WTC11 (cell line): ENCODE measurements at regions of chr2 and their contacts with region 1.

Region 1: DNA sequence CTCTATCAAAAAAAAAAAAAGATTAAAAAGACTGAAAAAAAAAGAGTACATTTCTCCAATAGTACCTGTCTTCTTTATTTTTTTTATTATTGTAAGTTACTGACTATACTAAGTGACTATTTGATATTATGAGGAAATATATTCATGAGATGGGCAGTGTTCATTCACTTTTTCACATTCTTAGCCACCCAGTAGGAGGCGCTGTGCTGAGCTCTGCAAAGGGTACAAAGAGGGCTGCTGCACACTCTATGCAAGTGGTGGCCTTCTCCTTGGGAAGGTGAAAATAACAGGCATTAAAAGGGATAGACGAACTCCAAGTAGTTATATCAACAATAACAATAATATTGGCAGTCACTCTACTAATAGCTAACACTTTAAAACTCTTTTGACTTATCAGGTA is 1034.9 kb upstream of the FANCL start:
- DNase-seq: peak; percentile 53
- ATAC-seq: peak; percentile 82
- H3K4me3 Mint-ChIP-seq: no peak overlapping the region
- H3K27ac Mint-ChIP-seq: no peak overlapping the region
- H3K4me1 Mint-ChIP-seq: no peaks in the 10 kb centered on the region
- H3K27me3 Mint-ChIP-seq: no peaks in the 10 kb centered on the region
- CTCF ChIP-seq: peak; percentile 78

Region 2: DNA sequence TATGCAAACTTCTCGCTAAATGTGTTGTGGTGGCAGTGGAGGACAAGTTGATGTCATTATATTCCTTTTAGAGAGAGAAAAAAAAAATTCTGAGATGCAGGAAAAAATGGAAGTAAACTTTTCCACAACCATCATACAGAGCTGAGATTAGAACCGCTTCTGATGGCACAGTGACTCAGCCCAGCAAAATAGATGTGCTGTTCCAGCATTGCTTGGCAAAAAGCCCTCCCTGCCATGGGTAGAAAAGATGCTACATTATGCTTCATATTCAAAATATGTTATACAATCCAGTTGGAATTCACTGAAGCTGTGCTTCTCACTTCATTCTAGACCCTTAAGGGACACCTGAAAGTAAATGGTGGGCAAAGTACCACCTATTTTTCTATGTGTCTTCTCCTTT is 12.7 kb after region 1 on chr2:
- CTCF ChIA-PET with region 1: interaction called, 13 read pairs
- POLR2A ChIA-PET with region 1: no interaction called
- DNase-seq: no peak
- ATAC-seq: no peak
- H3K4me3 Mint-ChIP-seq: no peak overlapping the region
- H3K27ac Mint-ChIP-seq: no peak overlapping the region
- H3K4me1 Mint-ChIP-seq: peaks cover 4% of the 10 kb centered on the region
- H3K27me3 Mint-ChIP-seq: no peaks in the 10 kb centered on the region
- CTCF ChIP-seq: no peak